ENCODE measurements at regions of chr3 and their contacts with region 1.

Region 1: DNA sequence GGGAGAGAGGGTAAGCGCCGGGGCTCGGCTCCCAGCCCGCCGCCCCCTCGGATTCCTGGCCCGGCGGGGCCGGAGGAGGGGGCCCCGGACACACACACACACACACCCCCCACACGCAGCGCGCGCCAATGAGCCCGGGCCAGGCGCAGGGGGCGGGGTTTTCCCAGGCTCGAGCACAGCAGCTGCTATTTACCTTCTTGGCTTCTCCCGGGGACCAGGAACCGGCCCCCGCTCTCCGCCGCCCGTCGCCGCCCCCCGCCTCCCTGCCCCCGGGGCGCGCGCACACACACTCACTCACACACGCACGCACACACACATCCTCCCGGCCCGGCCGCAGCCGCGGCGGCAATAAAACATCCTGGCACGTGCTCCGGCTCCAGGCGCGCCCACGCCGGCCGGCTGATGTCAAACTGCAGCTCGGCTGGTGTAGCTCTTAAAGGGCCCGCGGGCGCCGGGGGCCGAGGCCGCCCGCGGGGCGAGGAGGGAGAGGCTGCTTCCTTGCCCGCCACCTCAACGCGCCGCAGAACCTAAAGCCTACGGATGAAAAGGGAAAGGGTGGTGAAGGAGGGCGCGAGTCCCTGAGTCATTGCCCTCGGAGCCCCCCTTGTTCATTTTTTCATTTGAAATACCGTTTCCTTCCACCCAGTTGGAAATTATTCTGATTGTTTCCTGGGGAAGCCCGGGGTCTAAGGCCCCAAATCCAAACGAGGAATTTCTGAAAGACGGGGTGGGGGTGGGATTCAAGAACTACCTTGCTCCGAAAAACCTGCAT is 1.0 kb upstream of the HES1 start:
- DNase-seq: peak; percentile 68 to 97
- ATAC-seq: peak; percentile 60 to 71
- H3K4me3 ChIP-seq: peak overlapping the region; percentile 51
- H3K27ac ChIP-seq: peak overlapping the region; percentile 99
- H3K4me1 ChIP-seq: peaks cover 54% of the 10 kb centered on the region
- CTCF ChIP-seq: no peak
- EP300 ChIP-seq: peak; percentile 69 to 86; a peak in 3 of 5 replicates
- POLR2A ChIP-seq: no peak
- RAD21 ChIP-seq: peak; percentile 7 to 59; a peak in 4 of 5 replicates

Region 2: DNA sequence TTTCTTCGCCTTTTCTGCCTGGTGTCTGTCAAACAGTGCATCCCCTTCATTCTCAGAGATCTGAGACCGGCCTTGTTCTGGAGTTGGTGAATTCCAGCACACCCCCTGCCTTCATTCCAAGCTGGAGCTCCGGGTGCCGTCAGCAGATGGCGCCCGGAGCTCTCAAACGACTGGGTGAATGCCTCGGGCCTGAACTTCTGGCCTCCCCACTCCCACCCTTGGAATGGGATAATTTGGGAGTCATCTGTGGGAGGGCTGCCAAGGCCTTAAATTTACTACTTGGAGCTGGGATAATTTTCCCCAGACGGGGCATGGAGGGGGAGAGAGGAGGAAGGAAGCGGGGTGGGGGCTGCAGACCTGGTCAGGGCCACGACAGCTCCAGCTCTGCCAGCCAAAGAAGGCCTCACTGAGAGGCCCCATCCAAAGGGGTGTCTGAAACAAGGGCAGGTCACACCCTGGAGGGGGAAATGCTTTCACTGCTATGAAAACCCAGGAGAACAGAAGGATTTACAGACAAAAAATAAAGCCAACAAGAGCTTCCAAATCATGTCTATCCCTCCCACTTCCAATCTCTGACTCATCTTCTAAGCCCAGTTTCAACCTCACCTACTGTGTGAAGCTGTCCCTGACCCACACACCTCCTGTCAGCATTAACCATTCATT is 354.0 kb before region 1 on chr3:
- CTCF ChIA-PET with region 1: interaction called, 54 read pairs
- POLR2A ChIA-PET with region 1: interaction called, 30 read pairs
- DNase-seq: peak; percentile 64 to 88
- ATAC-seq: peak; percentile 89 to 94
- H3K4me3 ChIP-seq: no peak overlapping the region
- H3K27ac ChIP-seq: peak overlapping the region; percentile 69 to 82
- H3K4me1 ChIP-seq: peaks cover 44% of the 10 kb centered on the region
- CTCF ChIP-seq: peak; percentile 78
- EP300 ChIP-seq: no peak
- POLR2A ChIP-seq: no peak
- RAD21 ChIP-seq: peak; percentile 82 to 91

Region 3: DNA sequence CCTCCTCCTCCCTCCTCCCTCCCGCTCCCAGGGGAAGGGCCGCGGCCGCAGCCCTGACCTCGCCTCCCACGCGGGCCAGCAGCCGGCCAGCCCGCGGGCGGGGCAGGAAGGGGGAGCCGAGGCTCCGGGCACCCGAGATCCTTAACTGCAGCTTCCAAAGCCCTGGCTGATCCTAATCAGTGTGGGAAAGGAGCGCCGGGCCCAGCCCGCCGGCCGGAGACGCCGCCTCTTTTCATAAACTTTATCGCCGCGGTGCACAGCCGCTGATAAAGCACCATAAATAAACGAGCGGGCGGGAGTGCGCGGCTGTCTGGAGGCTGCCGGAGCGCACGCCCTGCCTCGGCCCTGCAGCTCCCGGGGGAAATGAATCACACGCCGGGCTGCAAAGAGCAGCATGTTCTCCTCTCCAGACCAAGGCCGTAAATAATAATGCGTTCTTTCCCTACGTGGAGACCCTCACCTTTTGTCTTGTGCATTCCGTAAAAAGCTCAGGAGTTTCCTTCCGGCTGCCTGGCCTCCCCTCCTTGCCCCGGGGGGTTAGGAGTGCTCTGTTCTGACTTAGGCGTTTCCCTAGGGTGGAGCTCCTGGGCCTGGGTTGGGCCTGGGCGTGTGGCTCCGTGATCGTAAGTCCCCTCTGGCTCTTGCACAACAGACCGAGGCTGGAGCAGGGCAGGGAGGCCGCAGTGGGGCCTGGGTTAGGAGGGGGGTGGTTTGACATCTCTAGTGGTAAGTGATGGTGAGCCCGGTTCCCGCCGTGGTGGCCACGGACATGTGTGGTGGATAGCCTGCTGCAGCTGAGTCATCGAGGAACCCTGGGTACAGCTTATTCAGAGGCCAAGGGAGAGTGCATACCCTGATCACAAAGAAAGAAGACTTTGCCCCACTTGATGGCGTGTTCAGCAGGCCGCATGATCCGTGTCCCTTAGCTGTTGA is 131.6 kb before region 1 on chr3:
- CTCF ChIA-PET with region 1: interaction called, 5 read pairs
- POLR2A ChIA-PET with region 1: interaction called, 48 read pairs
- DNase-seq: peak; percentile 82 to 95
- ATAC-seq: peak; percentile 95 to 96
- H3K4me3 ChIP-seq: peak overlapping the region; percentile 44
- H3K27ac ChIP-seq: peak overlapping the region; percentile 86 to 95
- H3K4me1 ChIP-seq: peaks cover 33% of the 10 kb centered on the region
- CTCF ChIP-seq: no peak
- EP300 ChIP-seq: peak in 1 of 2 experiments; percentile 42; a peak in 1 of 5 replicates
- POLR2A ChIP-seq: no peak; the same call in 1 of the 2 replicates
- RAD21 ChIP-seq: peak in 1 of 2 experiments; percentile 22; a peak in 2 of 5 replicates

Region 4: DNA sequence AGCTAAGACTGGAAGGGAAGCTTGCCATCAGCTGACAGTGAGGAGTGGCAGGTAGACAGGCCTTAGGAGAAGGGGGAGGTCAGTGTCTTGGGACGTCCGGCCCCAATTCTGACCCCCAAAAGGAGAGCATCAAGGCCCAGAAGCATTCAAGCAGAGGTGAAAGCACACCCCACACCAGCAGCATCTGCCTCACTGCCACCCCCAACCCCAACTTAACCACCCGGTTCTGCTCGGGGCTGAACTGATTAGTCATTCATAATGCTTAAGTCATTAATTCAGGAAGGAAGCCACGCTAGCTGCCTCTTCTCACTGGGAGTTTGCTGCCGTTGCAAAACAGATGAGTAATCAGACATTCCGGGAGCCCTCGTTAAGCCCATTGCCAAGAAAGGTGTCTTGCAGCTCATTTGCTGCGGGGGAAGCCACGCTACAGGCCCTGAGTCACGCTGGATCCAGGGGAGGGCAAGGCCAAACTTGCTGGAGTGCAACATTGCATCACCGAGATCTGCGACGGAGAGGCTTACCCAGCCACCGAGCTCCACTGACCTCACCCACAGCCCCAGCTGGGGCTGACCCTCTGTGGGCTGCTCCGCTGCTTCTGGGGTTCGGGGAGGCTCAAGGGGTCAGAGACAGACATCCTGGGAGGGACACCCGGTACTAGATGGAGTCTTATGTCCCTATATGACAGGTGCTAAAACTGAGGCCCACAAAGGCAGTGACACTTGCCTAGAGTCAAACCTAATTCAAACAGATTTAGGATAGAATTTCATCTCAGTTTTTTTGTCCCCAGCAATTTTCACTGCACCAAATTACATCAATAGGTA is 45.4 kb before region 1 on chr3:
- CTCF ChIA-PET with region 1: interaction called, 3 read pairs
- POLR2A ChIA-PET with region 1: interaction called, 17 read pairs
- DNase-seq: peak; percentile 86 to 94
- ATAC-seq: peak; percentile 88 to 93
- H3K4me3 ChIP-seq: no peak overlapping the region
- H3K27ac ChIP-seq: peak overlapping the region; percentile 83 to 91
- H3K4me1 ChIP-seq: peaks cover 41% of the 10 kb centered on the region
- CTCF ChIP-seq: no peak
- EP300 ChIP-seq: peak; percentile 85 to 87
- POLR2A ChIP-seq: no peak
- RAD21 ChIP-seq: peak; percentile 1 to 54; a peak in 3 of 5 replicates

Region 5: DNA sequence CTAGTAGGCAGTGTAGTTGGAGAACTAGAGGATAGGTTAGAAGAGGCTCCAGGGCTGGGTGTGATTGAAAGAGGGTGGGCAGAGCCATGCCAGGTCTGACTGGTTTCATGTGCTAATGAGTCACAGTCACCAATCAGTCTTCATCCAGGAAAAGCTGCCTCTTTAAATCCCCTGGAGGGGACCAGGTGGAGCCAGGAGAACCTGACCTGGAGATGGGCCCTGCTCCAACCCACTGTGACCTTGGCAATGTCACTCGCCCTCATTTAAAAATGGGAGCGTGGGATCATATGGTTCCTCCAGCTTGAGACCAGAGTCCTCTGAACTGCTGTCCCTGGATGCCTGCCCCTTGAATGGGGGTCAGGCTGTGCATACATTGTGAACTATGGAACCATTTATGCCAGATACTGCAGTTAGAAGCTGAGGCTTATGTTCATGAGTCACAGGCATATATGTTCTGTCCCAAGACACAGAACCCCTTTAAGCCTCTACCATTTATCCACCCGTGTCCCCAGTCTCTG is 24.0 kb after region 1 on chr3:
- CTCF ChIA-PET with region 1: no interaction called
- POLR2A ChIA-PET with region 1: no interaction called
- DNase-seq: no peak
- ATAC-seq: no peak
- H3K4me3 ChIP-seq: no peak overlapping the region
- H3K27ac ChIP-seq: no peak overlapping the region
- H3K4me1 ChIP-seq: peaks cover 8% of the 10 kb centered on the region; the same call in 1 of the 3 replicates
- CTCF ChIP-seq: no peak
- EP300 ChIP-seq: no peak
- POLR2A ChIP-seq: no peak
- RAD21 ChIP-seq: no peak

Region 6: DNA sequence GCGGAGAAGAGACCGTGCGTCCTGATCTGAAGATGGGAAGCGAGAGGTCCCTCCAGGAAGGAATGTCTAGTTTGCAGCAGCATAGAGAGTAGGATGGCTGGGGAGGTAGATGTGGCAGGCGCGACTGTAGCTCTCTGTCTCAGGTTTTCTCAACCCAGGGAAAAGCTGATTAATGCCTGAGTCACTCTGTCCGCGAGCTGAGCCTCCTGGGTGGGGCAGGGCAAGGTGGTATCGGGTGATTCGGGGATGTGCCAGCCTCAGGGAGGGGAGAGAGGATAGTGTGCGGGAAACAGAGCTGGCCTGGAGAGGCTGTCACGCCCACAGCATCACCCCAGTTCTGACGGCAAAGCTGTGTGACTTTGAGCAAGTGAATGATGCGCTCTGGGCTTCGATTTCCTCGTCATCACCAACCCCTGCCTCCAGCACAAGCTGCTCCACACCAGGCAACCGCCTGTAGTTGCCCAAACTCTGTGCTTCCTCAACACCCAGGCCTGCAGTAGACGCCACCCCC is 187.8 kb after region 1 on chr3:
- CTCF ChIA-PET with region 1: interaction called, 116 read pairs
- POLR2A ChIA-PET with region 1: interaction called, 12 read pairs
- DNase-seq: peak; percentile 84 to 91
- ATAC-seq: peak; percentile 79 to 81
- H3K4me3 ChIP-seq: peak overlapping the region; percentile 66
- H3K27ac ChIP-seq: peak overlapping the region; percentile 95 to 96
- H3K4me1 ChIP-seq: peaks cover 43% of the 10 kb centered on the region
- CTCF ChIP-seq: no peak
- EP300 ChIP-seq: no peak
- POLR2A ChIP-seq: peak; percentile 30; the same call in 1 of the 2 replicates
- RAD21 ChIP-seq: no peak

Measured in A549 (cell line).